CD4-positive, alpha-beta memory T cell (primary cell): ENCODE measurements at regions of chr20 and their contacts with region 1.

Region 1: GRCh38 chr20:34516247-34517113 is at the start of gene DYNLRB1:
- DNase-seq: peak; percentile 92 to 96 (median 93)
- H3K4me3 ChIP-seq: peak within 1 kb of the TSS; percentile 91 to 99
- H3K4me3 Mint-ChIP-seq: peak within 1 kb of the TSS; percentile 93 to 100 (median 98)
- H3K27ac ChIP-seq: peak within 1 kb of the TSS; percentile 89
- H3K27ac Mint-ChIP-seq: peak within 1 kb of the TSS; percentile 96 to 99 (median 98)
- H3K4me1 ChIP-seq: peaks cover 46% of the 10 kb centered on the region
- H3K4me1 Mint-ChIP-seq: peaks cover 29 to 91% (median 52%) of the 10 kb centered on the region in 4 donors
- H3K27me3 ChIP-seq: no peaks in the 10 kb centered on the region
- H3K27me3 Mint-ChIP-seq: no peaks in the 10 kb centered on the region
- total RNA-seq, gene DYNLRB1: 75.5 to 81.0 TPM

Region 2: GRCh38 chr20:33554914-33555420 is 961.5 kb before region 1 on chr20:
- CTCF ChIA-PET with region 1: no interaction called
- POLR2A ChIA-PET with region 1: no interaction called
- intact Hi-C with region 1: loop called (anchors 5 kb)
- DNase-seq: peak; percentile 77 to 94 (median 91)
- H3K4me3 ChIP-seq: no peak overlapping the region
- H3K4me3 Mint-ChIP-seq: peak overlapping the region; percentile 57 to 82 (median 71)
- H3K27ac ChIP-seq: peak overlapping the region; percentile 76
- H3K27ac Mint-ChIP-seq: peak overlapping the region; percentile 91 to 99 (median 97)
- H3K4me1 ChIP-seq: peaks cover 20% of the 10 kb centered on the region
- H3K4me1 Mint-ChIP-seq: peaks cover 14 to 41% (median 24%) of the 10 kb centered on the region in 4 donors
- H3K27me3 ChIP-seq: no peaks in the 10 kb centered on the region
- H3K27me3 Mint-ChIP-seq: no peaks in the 10 kb centered on the region

Region 3: GRCh38 chr20:34111702-34112599 is 404.5 kb before region 1 on chr20 and contains the start of gene EIF2S2:
- CTCF ChIA-PET with region 1: no interaction called
- POLR2A ChIA-PET with region 1: no interaction called
- intact Hi-C with region 1: no loop called
- DNase-seq: peak; percentile 93 to 97 (median 97)
- H3K4me3 ChIP-seq: peak within 1 kb of the TSS; percentile 92 to 94
- H3K4me3 Mint-ChIP-seq: peak within 1 kb of the TSS; percentile 90 to 99 (median 94)
- H3K27ac ChIP-seq: peak within 1 kb of the TSS; percentile 95
- H3K27ac Mint-ChIP-seq: peak within 1 kb of the TSS; percentile 91 to 99 (median 96)
- H3K4me1 ChIP-seq: peaks cover 47% of the 10 kb centered on the region
- H3K4me1 Mint-ChIP-seq: peaks cover 32 to 52% (median 40%) of the 10 kb centered on the region in 4 donors
- H3K27me3 ChIP-seq: no peaks in the 10 kb centered on the region
- H3K27me3 Mint-ChIP-seq: no peaks in the 10 kb centered on the region
- total RNA-seq, gene EIF2S2: 52.2 to 53.1 TPM

Region 4: GRCh38 chr20:34302723-34303528 is 213.6 kb before region 1 on chr20 and contains the start of gene AHCY:
- CTCF ChIA-PET with region 1: interaction called, 5 read pairs
- POLR2A ChIA-PET with region 1: interaction called, 16 read pairs
- intact Hi-C with region 1: loop called (anchors 2 kb)
- DNase-seq: peak; percentile 90 to 95 (median 93)
- H3K4me3 ChIP-seq: peak within 1 kb of the TSS; percentile 86 to 94
- H3K4me3 Mint-ChIP-seq: peak within 1 kb of the TSS; percentile 90 to 98 (median 95)
- H3K27ac ChIP-seq: peak within 1 kb of the TSS; percentile 81
- H3K27ac Mint-ChIP-seq: peak within 1 kb of the TSS; percentile 87 to 98 (median 97)
- H3K4me1 ChIP-seq: peaks cover 11% of the 10 kb centered on the region
- H3K4me1 Mint-ChIP-seq: peaks cover 9 to 26% (median 10%) of the 10 kb centered on the region in 4 donors
- H3K27me3 ChIP-seq: no peaks in the 10 kb centered on the region
- H3K27me3 Mint-ChIP-seq: no peaks in the 10 kb centered on the region
- total RNA-seq, gene AHCY: 23.1 to 24.2 TPM

Region 5: GRCh38 chr20:34363062-34363464 is 153.4 kb before region 1 on chr20 and contains the start of gene ITCH:
- CTCF ChIA-PET with region 1: interaction called, 5 read pairs
- POLR2A ChIA-PET with region 1: interaction called, 21 read pairs
- intact Hi-C with region 1: loop called (anchors 1 kb)
- DNase-seq: peak; percentile 88 to 93 (median 89)
- H3K4me3 ChIP-seq: peak within 1 kb of the TSS; percentile 73 to 89
- H3K4me3 Mint-ChIP-seq: peak within 1 kb of the TSS; percentile 94 to 100 (median 98)
- H3K27ac ChIP-seq: peak within 1 kb of the TSS; percentile 78
- H3K27ac Mint-ChIP-seq: peak within 1 kb of the TSS; percentile 92 to 99 (median 99)
- H3K4me1 ChIP-seq: peaks cover 50% of the 10 kb centered on the region
- H3K4me1 Mint-ChIP-seq: peaks cover 21 to 51% (median 35%) of the 10 kb centered on the region in 4 donors
- H3K27me3 ChIP-seq: no peaks in the 10 kb centered on the region
- H3K27me3 Mint-ChIP-seq: peaks cover 0 to 1% of the 10 kb centered on the region in 2 donors
- total RNA-seq, gene ITCH: 59.3 to 68.9 TPM

Region 6: GRCh38 chr20:34538671-34539123 is 22.2 kb after region 1 on chr20:
- CTCF ChIA-PET with region 1: interaction called, 13 read pairs
- POLR2A ChIA-PET with region 1: interaction called, 8 read pairs
- intact Hi-C with region 1: no loop called
- DNase-seq: peak in 3 of 5 donors; percentile 41 to 50 (median 47)
- H3K4me3 ChIP-seq: no peak overlapping the region
- H3K4me3 Mint-ChIP-seq: no peak overlapping the region
- H3K27ac ChIP-seq: no peak overlapping the region
- H3K27ac Mint-ChIP-seq: peak overlapping the region; percentile 29 to 73 (median 63)
- H3K4me1 ChIP-seq: peaks cover 34% of the 10 kb centered on the region
- H3K4me1 Mint-ChIP-seq: peaks cover 20 to 43% (median 33%) of the 10 kb centered on the region in 4 donors
- H3K27me3 ChIP-seq: no peaks in the 10 kb centered on the region
- H3K27me3 Mint-ChIP-seq: no peaks in the 10 kb centered on the region

Region 7: DNA sequence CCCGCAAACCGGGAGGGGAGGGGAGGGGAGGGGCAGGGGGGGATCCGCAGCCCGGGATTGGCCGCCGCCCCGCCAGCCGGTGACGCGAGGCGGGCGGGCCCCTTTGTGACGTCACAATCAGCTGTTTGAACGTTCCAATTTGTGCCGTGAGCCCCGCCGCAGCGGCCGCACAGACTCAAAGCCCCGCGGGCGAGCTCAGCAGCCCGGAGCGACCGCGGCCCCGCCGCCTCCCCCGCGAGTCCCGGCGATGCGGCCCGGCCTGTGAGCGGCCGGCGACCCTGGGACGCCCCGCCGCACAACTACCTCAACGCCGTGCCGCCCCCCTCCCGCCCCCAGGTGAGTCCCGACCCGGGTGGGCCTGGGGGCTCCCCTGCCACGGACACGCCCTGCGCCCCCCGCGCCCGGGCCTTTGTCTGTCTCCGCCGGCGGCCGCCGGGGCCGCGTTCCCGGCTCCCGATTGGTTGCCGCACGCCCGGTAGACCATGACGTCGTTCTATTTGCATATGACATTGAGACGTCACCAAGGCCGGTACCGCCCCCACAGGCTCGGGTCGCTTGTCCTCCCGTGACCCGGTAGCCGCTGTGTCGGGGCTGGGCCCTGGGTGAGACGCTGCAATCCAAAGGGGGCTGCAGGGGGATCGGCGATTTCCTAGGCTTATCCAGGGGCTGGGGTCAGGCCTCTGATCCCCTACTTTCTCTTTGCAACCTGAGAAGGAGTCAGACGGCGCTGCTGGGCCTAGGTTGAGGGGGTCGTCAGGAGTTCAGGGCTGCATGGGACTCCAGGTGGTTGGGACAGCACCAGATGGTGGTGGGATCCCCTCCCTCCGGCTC is 187.9 kb after region 1 on chr20 and contains the start of gene TP53INP2:
- CTCF ChIA-PET with region 1: interaction called, 17 read pairs
- POLR2A ChIA-PET with region 1: interaction called, 4 read pairs
- intact Hi-C with region 1: loop called (anchors 1 kb)
- DNase-seq: peak; percentile 89 to 94 (median 90)
- H3K4me3 ChIP-seq: peak within 1 kb of the TSS; percentile 56 to 64
- H3K4me3 Mint-ChIP-seq: peak within 1 kb of the TSS; percentile 88 to 98 (median 95)
- H3K27ac ChIP-seq: peak within 1 kb of the TSS; percentile 90
- H3K27ac Mint-ChIP-seq: peak within 1 kb of the TSS; percentile 94 to 100 (median 99)
- H3K4me1 ChIP-seq: peaks cover 23% of the 10 kb centered on the region
- H3K4me1 Mint-ChIP-seq: peaks cover 12 to 50% (median 19%) of the 10 kb centered on the region in 4 donors
- H3K27me3 ChIP-seq: no peaks in the 10 kb centered on the region
- H3K27me3 Mint-ChIP-seq: no peaks in the 10 kb centered on the region
- total RNA-seq, gene TP53INP2: 0.86 to 1.2 TPM